Activated CD8-positive, alpha-beta T cell treated with anti-CD3 and anti-CD28 coated beads, Interleukin-2, amount 10 ng/mL, durations not matched to agents 7 days and 5 days (primary cell): ENCODE measurements at regions of chr10 and their contacts with region 1.

Region 1: GRCh38 chr10:133308421-133309110 is at the starts of genes TUBGCP2 and ZNF511:
- DNase-seq: peak; percentile 89
- ATAC-seq: peak; percentile 73
- H3K4me3 Mint-ChIP-seq: peak within 1 kb of the TSS; percentile 95
- H3K27ac Mint-ChIP-seq: peak within 1 kb of the TSS; percentile 99
- H3K4me1 Mint-ChIP-seq: peaks cover 19% of the 10 kb centered on the region
- H3K27me3 Mint-ChIP-seq: no peaks in the 10 kb centered on the region
- total RNA-seq, gene TUBGCP2: 53.5 to 59.0 TPM
- total RNA-seq, gene ZNF511: 61.4 to 62.6 TPM

Region 2: GRCh38 chr10:133278577-133279265 is 29.8 kb before region 1 on chr10:
- CTCF ChIA-PET with region 1: interaction called, 23 read pairs
- POLR2A ChIA-PET with region 1: interaction called, 13 read pairs
- DNase-seq: peak; percentile 82
- ATAC-seq: peak; percentile 22
- H3K4me3 Mint-ChIP-seq: peak overlapping the region; percentile 76
- H3K27ac Mint-ChIP-seq: peak overlapping the region; percentile 92
- H3K4me1 Mint-ChIP-seq: peaks cover 49% of the 10 kb centered on the region
- H3K27me3 Mint-ChIP-seq: no peaks in the 10 kb centered on the region

Region 3: DNA sequence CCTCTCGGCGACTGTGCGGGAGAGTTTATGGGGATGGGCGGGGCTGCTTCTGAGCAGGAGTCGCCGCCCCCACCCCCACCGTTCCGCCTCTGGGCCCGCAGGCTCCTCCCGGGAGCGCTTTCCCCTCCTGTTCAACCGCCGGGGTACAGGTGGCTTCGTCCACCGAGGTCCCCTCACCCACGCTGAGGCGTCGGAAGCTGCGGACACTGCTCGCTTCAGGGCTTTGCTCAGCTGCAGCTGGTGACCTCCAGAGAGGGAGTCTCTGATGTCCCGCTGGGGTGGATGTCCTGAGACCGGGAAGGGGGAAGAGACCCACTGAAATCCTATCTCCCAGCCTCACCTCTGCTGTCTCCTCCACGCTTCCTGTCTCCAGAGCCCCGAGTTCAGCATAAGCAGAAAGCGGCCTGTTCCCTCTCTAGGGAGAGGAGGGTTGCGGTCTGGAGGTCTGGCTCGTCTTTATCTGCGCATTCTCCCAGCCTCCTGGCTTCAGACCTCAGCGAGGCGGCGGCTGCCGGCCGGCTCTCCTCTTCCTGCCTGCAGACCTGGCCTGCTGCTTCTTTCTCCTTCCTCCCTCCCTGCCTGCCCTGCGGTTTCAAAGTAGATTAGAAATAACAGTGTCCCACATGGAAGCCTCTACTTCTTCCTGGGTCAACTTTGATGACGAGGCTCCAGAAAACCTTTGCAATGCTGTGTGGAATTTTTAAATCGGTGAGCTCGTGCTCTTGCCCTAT is 220.4 kb after region 1 on chr10:
- CTCF ChIA-PET with region 1: no interaction called
- POLR2A ChIA-PET with region 1: no interaction called
- DNase-seq: no peak
- ATAC-seq: peak; percentile 54
- H3K4me3 Mint-ChIP-seq: peak overlapping the region; percentile 33
- H3K27ac Mint-ChIP-seq: no peak overlapping the region
- H3K4me1 Mint-ChIP-seq: peaks cover 21% of the 10 kb centered on the region
- H3K27me3 Mint-ChIP-seq: peaks cover 45% of the 10 kb centered on the region